Dorsolateral prefrontal cortex (tissue), 120 donors: ENCODE measurements at regions of chr9 and their contacts with region 1.

Region 1: DNA sequence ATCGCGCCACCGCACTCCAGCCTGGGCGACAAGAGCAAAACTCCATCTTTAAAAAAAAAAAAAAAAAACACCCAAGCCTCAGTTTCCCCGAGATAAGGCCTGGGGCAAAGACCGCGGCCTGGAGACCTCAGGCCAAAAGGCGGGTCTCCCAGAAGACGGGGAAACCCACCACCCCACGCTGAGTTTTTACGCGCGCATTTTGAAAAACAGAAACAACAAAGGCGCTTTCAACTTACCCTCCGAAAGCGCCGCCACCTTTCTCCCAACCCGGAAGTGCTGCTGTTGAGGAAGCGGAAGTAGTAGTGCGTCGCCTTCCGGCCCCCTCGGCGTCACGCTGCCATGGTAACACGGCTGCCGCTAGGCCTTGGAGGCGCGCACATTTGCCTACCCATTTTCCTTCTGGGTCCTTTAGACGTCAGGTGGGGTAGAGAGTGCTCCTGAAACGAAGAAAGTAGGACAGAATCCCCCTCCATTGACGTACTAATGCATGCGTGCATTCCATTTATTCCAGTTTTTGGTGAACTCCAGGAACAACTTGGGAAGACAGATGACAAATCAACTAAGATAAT is at the start of gene TTF1:
- DNase-seq: peak; percentile 78 to 94 (median 87)
- H3K4me3 ChIP-seq: peak within 1 kb of the TSS; percentile 56 to 96 (median 85)
- H3K27ac ChIP-seq: peak within 1 kb of the TSS in 6 of 59 donors; percentile 12 to 67 (median 46)
- H3K27me3 ChIP-seq: peaks cover 0 to 26% (median 21%) of the 10 kb centered on the region in 45 donors
- CTCF ChIP-seq: peak in 26 of 56 donors; percentile 10 to 46 (median 22)
- total RNA-seq, gene TTF1: 10.4 to 20.0 (median 14.9) TPM

Region 2: DNA sequence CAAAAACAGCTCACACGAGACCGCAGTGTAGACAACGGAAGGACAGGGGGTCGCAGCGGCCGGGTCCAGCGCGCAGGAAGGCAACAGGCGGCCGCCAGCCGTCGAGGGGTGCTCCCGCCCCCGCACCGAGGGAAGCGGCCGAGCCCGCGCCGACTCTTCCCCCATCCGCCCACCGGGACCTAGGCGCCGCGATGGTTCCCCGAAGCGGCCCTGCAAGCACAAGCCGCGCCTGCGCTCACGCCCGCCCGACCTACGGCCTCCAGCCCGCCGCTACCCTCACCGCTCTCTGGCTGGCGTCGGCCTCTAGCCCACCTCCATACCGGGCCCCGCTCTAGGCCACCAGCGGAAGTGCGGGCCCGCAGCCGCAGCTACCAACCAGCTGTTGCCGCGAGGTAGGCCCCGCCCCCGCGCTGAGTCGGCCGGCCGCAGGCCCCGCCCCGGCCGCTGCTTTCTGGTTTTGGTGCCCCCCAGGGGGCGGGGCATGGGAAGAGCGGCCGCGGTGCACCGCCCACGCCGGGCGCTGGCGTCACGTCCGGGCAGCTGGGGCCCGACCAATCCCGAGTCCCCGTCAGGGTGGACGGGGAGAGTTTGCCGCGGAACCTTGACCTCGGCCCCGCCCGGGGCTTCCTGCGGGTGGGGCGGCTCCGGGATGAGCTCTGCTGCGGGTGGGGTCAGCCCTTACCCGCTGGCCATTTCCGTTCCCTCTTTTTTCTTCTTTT is 51.8 kb before region 1 on chr9 and contains the start of gene SETX:
- intact Hi-C with region 1: loop called (anchors 5 kb)
- DNase-seq: peak; percentile 94 to 99 (median 97)
- H3K4me3 ChIP-seq: peak within 1 kb of the TSS; percentile 63 to 100 (median 97)
- H3K27ac ChIP-seq: peak within 1 kb of the TSS in 57 of 59 donors; percentile 14 to 94 (median 84)
- H3K27me3 ChIP-seq: no peaks in the 10 kb centered on the region
- CTCF ChIP-seq: peak in 29 of 56 donors; percentile 8 to 57 (median 29)
- total RNA-seq, gene SETX: 42.9 to 60.4 (median 50.0) TPM

Region 3: GRCh38 chr9:132457504-132458236 is 51.0 kb after region 1 on chr9:
- intact Hi-C with region 1: no loop called
- DNase-seq: no peak
- H3K4me3 ChIP-seq: no peak overlapping the region
- H3K27ac ChIP-seq: no peak overlapping the region
- H3K27me3 ChIP-seq: peaks cover 0 to 18% (median 0%) of the 10 kb centered on the region in 45 donors
- CTCF ChIP-seq: no peak

Region 4: DNA sequence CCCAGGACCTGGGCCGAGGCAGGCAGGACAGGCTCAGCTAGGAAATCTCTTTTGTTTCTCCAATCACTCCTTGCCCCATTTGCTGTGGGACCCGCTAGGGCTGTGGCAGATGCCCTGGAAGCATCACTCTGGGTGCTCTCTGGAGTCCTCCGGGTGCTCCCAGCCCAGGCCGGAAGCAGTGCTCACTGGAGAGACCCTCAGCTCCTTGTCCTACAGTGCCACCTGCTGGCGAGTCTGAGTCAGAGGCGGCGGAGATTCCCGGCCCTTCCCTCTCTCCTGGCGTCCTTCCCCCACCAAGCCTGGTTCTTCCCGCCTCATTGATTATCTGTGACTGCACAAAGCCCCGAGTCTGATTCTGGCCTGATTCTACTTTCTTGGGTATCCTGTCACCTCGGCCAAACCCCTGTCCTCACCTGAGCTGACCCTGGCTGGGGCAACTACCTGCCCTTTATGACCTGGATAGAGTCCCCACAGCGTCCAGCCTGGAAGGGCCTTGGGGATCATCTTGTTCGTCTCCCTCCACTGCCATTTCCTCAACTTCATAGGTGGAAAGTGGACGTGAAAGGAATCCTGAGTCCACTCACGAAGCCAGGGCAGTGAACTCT is 168.5 kb after region 1 on chr9:
- intact Hi-C with region 1: loop called (anchors 5 kb)
- DNase-seq: peak; percentile 45 to 88 (median 73)
- H3K4me3 ChIP-seq: no peak overlapping the region
- H3K27ac ChIP-seq: no peak overlapping the region
- H3K27me3 ChIP-seq: peaks cover under 1 to 66% (median 30%) of the 10 kb centered on the region in 45 donors
- CTCF ChIP-seq: peak; percentile 15 to 93 (median 73)

Region 5: DNA sequence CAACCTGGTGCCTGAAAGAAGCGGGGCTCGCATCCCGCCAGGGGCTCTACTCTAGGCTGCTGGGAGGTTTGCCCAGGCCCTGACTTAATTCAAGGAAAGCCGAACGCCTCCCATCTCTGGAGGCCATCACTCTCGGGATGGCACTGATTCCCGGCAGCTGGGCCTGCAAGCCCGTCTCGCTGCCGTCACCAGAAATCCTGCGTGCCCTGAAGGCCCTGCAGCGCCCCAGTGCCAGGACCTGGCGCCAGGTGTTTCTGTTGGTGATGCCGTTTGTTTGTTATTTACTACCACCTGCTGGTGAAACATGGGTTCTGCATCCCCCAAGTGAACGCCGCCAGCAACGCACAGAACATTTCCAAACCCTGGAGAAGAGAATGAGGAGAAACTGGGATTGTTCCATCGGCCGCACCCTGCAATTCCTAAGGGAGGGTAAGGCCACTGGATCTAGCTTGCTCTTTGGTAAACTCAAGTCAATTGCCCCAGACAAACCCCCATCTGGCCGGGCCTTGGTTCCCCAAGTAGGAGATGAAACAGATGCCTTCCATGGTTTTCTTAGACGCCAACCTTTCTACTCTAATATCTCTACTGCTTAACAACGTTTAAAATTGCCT is 393.5 kb after region 1 on chr9:
- intact Hi-C with region 1: loop called (anchors 5 to 10 kb)
- DNase-seq: peak; percentile 70 to 86 (median 76)
- H3K4me3 ChIP-seq: peak overlapping the region in 26 of 59 donors; percentile 8 to 48 (median 28)
- H3K27ac ChIP-seq: peak overlapping the region in 1 of 59 donors; percentile 25
- H3K27me3 ChIP-seq: no peaks in the 10 kb centered on the region
- CTCF ChIP-seq: peak; percentile 65 to 98 (median 94)

Region 6: GRCh38 chr9:132973713-132974112 is 567.1 kb after region 1 on chr9:
- intact Hi-C with region 1: loop called in 1 of 2 experiments (anchors 10 kb)
- DNase-seq: no peak
- H3K4me3 ChIP-seq: no peak overlapping the region
- H3K27ac ChIP-seq: no peak overlapping the region
- H3K27me3 ChIP-seq: peaks cover 0 to 27% (median 3%) of the 10 kb centered on the region in 45 donors
- CTCF ChIP-seq: no peak